ENCODE measurements at regions of chr22 and their contacts with region 1.

Region 1: DNA sequence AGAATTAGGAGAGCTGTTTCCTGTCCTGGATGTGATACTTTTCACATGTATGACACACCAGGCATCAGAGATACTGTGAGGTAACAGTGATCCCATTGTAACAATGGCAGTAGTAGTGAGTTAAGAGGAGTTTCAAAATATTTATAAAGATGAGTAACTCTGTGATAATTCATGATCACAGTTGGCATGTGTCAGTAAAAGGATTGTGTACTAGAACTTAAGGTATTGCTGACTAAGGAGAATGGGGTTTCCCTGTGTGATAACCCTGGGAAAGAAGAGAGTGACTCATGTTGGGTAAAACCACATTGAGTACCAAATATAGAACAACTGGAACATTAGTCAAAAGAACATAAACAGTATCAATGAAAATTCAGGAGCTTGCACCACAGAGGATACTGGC is 22.9 kb upstream of the SLC5A1 start:
- DNase-seq: no peak
- H3K4me3 Mint-ChIP-seq: no peak overlapping the region
- H3K27ac Mint-ChIP-seq: no peak overlapping the region
- H3K4me1 Mint-ChIP-seq: peaks cover 9% of the 10 kb centered on the region
- H3K27me3 Mint-ChIP-seq: peaks cover 14% of the 10 kb centered on the region

Region 2: DNA sequence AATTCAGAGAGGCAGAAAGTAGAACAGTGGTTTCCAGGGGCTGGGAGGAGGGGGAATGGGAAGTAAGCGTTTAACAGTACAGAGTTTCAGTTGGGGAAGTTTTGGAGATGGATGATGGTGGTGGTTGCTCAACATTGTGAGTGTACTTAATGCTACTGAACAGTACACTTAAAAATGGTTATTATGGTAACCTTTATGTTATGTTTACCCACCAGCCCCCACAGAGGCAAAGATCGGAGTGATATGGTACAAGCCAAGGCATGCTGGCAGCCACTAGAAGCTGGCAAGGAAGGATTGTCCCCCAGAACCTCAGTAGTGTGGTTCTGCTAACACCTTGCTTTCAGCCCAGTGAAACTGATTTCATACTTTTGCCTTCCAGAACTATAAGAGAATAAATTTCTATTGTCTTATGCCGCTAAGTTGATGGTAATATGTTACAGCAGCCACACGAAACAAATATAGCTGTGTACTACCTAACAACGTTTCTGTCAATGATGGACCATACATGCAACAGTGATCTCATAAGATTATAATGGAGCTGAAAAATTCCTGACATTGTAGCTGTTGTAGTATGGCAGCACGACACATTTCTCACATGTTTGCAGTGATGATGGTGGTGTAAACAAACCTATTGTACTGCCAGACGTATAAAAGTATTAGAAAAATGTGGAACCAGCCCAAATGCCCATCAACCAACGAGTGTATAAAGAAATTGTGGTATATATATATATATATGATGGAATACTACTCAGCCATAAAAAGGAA is 17.0 kb after region 1 on chr22:
- CTCF ChIA-PET with region 1: no interaction called
- intact Hi-C with region 1: no loop called
- DNase-seq: no peak
- H3K4me3 Mint-ChIP-seq: no peak overlapping the region
- H3K27ac Mint-ChIP-seq: no peak overlapping the region
- H3K4me1 Mint-ChIP-seq: no peaks in the 10 kb centered on the region
- H3K27me3 Mint-ChIP-seq: peaks cover 21% of the 10 kb centered on the region

Region 3: DNA sequence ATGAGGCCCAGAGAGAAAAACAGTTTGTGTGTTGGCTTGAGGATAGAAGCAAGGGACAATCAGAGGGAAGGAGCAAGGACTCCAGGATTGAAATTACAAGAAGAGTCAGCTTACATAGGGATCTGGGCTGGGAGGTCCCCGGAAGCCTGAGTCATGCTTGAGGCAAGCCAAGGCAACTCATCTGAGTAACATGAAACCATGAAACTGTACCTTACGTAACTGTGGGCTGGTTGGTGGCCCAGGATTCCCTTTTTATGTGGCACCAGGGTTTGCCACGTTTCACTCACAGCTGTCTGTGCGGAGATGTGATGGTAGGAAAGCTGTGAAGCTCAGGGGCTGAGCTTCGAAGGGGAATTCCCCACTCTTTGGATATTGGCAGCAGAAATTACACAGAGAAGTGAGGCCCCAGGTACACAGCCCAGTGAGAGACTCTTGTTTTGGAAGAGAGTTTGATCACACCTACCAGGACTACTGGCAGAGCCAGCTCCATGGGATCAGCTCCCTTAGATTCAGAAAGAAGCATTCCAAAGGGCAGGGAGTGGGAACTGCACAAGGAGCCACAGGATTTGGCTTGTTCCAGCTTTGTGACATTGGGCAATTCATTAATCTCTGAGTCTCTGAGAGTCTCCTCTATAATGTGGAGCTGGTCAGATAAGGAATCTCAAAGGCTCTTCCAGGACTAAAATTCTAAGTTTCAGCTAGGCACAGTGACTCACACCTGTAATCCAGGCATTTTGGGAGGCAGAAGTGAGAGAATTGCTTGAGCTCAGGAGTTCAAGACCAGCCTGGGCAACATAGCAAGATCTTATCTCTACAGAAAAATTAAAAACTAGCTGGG is 30.8 kb after region 1 on chr22:
- CTCF ChIA-PET with region 1: no interaction called
- intact Hi-C with region 1: loop called (anchors 1 kb)
- DNase-seq: peak; percentile 91
- H3K4me3 Mint-ChIP-seq: no peak overlapping the region
- H3K27ac Mint-ChIP-seq: peak overlapping the region; percentile 47
- H3K4me1 Mint-ChIP-seq: peaks cover 16% of the 10 kb centered on the region
- H3K27me3 Mint-ChIP-seq: peaks cover 29% of the 10 kb centered on the region